IMR-90 (cell line): ENCODE measurements at regions of chr4 and their contacts with region 1.

Region 1: GRCh38 chr4:126346654-126347053 is 1031.9 kb downstream of the FAT4 start:
- DNase-seq: no peak
- ATAC-seq: no peak
- H3K4me3 ChIP-seq: no peak overlapping the region
- H3K27ac ChIP-seq: no peak overlapping the region
- H3K4me1 ChIP-seq: no peaks in the 10 kb centered on the region
- H3K27me3 ChIP-seq: no peaks in the 10 kb centered on the region
- CTCF ChIP-seq: no peak
- POLR2A ChIP-seq: no peak
- RAD21 ChIP-seq: no peak

Region 2: DNA sequence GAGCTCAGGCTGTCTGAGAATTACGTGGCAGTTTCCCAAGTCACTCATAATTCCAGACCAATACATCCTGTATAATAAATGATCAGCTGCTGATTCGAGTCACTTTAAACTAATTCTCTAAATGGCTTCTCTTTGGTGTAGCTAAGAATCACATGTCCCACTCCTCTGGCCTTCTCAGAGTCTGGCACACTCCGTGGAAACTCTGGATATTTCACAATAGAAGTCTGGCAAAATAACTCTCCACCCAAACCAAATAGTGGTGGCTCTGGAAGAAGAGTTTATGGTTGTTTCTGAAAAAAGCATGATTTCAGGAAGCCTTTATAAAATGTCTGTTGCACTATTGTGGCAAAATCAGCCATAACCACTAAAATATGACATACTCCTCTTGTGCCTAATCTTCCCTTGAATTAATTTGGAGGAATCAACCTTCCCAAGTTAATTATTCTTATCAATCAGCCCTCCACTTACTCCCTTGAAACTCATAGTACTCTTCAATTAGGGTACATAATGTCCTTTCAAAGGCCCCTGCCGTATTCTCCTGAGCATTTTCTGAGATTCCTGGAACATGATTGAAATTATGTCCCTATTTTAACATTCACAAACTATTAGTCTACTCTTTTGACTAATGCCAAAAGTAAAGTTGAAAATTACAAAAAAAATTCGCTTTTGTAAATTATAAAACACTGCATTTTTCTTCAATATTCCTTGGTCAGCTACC is 40.3 kb before region 1 on chr4:
- CTCF ChIA-PET with region 1: no interaction called
- POLR2A ChIA-PET with region 1: no interaction called
- dilution Hi-C with region 1: no loop called
- in situ Hi-C with region 1: no loop called
- intact Hi-C with region 1: loop called (anchors 5 kb)
- DNase-seq: no peak
- ATAC-seq: no peak
- H3K4me3 ChIP-seq: no peak overlapping the region
- H3K27ac ChIP-seq: no peak overlapping the region
- H3K4me1 ChIP-seq: no peaks in the 10 kb centered on the region
- H3K27me3 ChIP-seq: no peaks in the 10 kb centered on the region
- CTCF ChIP-seq: no peak
- POLR2A ChIP-seq: no peak
- RAD21 ChIP-seq: no peak

Region 3: GRCh38 chr4:126328914-126329313 is 17.7 kb before region 1 on chr4:
- CTCF ChIA-PET with region 1: no interaction called
- POLR2A ChIA-PET with region 1: no interaction called
- dilution Hi-C with region 1: no loop called
- in situ Hi-C with region 1: no loop called
- intact Hi-C with region 1: loop called (anchors 1 kb)
- DNase-seq: no peak
- ATAC-seq: no peak
- H3K4me3 ChIP-seq: no peak overlapping the region
- H3K27ac ChIP-seq: no peak overlapping the region
- H3K4me1 ChIP-seq: no peaks in the 10 kb centered on the region
- H3K27me3 ChIP-seq: no peaks in the 10 kb centered on the region
- CTCF ChIP-seq: no peak
- POLR2A ChIP-seq: no peak
- RAD21 ChIP-seq: no peak

Region 4: DNA sequence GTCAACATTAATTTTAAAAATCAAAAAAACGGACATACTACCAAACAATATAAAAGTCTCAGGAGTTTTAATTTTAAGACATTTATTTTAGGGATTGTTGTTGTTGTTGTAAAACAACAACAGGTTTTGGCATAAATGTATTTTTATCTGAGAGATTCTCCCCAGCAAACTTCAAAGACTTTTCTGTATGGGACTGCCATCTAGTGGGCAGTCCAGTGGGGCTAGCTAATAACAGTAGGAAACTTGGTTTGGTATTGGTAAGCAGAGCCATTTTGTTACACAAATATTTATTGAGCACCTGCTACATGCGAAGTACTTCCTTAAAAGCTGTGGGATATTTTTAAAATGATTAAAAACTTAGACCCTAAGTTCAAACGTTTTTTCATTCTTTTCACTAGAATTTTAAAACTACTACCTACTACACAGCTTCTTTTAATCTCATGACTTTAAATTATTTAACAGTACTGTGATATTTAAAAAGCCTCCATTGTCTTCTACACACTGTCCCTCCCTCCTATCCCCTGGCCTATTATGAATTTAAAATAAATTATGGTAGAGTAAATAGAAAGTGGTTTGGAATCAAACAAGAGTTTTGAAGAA is 257.7 kb after region 1 on chr4:
- CTCF ChIA-PET with region 1: no interaction called
- POLR2A ChIA-PET with region 1: no interaction called
- dilution Hi-C with region 1: no loop called
- in situ Hi-C with region 1: no loop called
- intact Hi-C with region 1: no loop called
- DNase-seq: peak; percentile 61
- ATAC-seq: peak; percentile 76
- H3K4me3 ChIP-seq: no peak overlapping the region
- H3K27ac ChIP-seq: no peak overlapping the region
- H3K4me1 ChIP-seq: no peaks in the 10 kb centered on the region
- H3K27me3 ChIP-seq: no peaks in the 10 kb centered on the region
- CTCF ChIP-seq: peak; percentile 78
- POLR2A ChIP-seq: no peak
- RAD21 ChIP-seq: peak; percentile 73